K562 (cell line): ENCODE measurements at regions of chr4 and their contacts with region 1.

Region 1: GRCh38 chr4:122577808-122578781 is 42.8 kb downstream of the IL21 start:
- DNase-seq: peak; percentile 63 to 70 (median 67)
- ATAC-seq: peak; percentile 95
- H3K4me3 ChIP-seq: no peak overlapping the region
- H3K27ac ChIP-seq: no peak overlapping the region
- H3K4me1 ChIP-seq: no peaks in the 10 kb centered on the region
- H3K27me3 ChIP-seq: no peaks in the 10 kb centered on the region
- CTCF ChIP-seq: peak; percentile 75 to 78 (median 77)
- EP300 ChIP-seq: no peak
- POLR2A ChIP-seq: no peak
- RAD21 ChIP-seq: peak; percentile 53 to 73; a peak in 3 of 4 replicates

Region 2: DNA sequence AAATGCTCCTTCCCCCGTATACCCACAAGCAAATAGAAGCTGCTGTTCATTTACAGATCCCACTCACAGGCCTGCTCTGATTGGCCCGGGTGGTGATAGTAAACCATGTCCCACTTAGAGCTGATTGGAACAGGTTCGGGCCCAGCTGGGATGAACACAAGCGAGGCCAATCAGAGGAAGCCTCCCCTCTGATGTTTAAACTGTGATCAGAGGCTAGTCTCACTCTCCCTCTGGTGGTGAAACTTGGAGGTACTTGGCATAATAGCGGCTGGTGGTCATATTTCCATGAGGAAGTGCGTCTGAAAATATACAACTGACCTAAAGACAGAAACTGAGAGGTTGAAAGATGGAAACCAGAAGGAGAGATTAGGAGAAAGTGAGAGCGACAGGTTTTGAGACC is 574.8 kb before region 1 on chr4:
- CTCF ChIA-PET with region 1: no interaction called
- POLR2A ChIA-PET with region 1: no interaction called
- in situ Hi-C with region 1: no loop called
- intact Hi-C with region 1: loop called (anchors 5 kb)
- DNase-seq: peak; percentile 78 to 84 (median 82)
- ATAC-seq: peak; percentile 96
- H3K4me3 ChIP-seq: no peak overlapping the region
- H3K27ac ChIP-seq: no peak overlapping the region
- H3K4me1 ChIP-seq: no peaks in the 10 kb centered on the region
- H3K27me3 ChIP-seq: no peaks in the 10 kb centered on the region; a peak in 1 of 5 replicates
- CTCF ChIP-seq: peak; percentile 75 to 84 (median 81)
- EP300 ChIP-seq: no peak
- POLR2A ChIP-seq: no peak
- RAD21 ChIP-seq: peak; percentile 64 to 84

Region 3: GRCh38 chr4:122309988-122310626 is 268.0 kb before region 1 on chr4:
- CTCF ChIA-PET with region 1: interaction called, 18 read pairs
- POLR2A ChIA-PET with region 1: no interaction called
- in situ Hi-C with region 1: loop called (anchors 5 kb)
- intact Hi-C with region 1: loop called (anchors 1 kb)
- DNase-seq: peak; percentile 3 to 12 (median 12)
- ATAC-seq: no peak
- H3K4me3 ChIP-seq: no peak overlapping the region
- H3K27ac ChIP-seq: no peak overlapping the region
- H3K4me1 ChIP-seq: no peaks in the 10 kb centered on the region; a peak in 1 of 5 replicates
- H3K27me3 ChIP-seq: no peaks in the 10 kb centered on the region
- CTCF ChIP-seq: peak in 2 of 3 experiments; percentile 33 to 72; a peak in 3 of 6 replicates
- EP300 ChIP-seq: no peak
- POLR2A ChIP-seq: no peak
- RAD21 ChIP-seq: peak; percentile 51 to 60

Region 4: GRCh38 chr4:122450847-122451246 is 127.2 kb before region 1 on chr4:
- CTCF ChIA-PET with region 1: no interaction called
- POLR2A ChIA-PET with region 1: no interaction called
- in situ Hi-C with region 1: no loop called
- intact Hi-C with region 1: loop called (anchors 2 kb)
- DNase-seq: peak in 2 of 4 experiments; percentile 12 to 34
- ATAC-seq: peak; percentile 88
- H3K4me3 ChIP-seq: no peak overlapping the region
- H3K27ac ChIP-seq: no peak overlapping the region
- H3K4me1 ChIP-seq: no peaks in the 10 kb centered on the region
- H3K27me3 ChIP-seq: no peaks in the 10 kb centered on the region
- CTCF ChIP-seq: peak; percentile 42 to 69 (median 61); a peak in 4 of 6 replicates
- EP300 ChIP-seq: no peak
- POLR2A ChIP-seq: no peak
- RAD21 ChIP-seq: peak in 1 of 2 experiments; percentile 48; a peak in 2 of 4 replicates

Region 5: DNA sequence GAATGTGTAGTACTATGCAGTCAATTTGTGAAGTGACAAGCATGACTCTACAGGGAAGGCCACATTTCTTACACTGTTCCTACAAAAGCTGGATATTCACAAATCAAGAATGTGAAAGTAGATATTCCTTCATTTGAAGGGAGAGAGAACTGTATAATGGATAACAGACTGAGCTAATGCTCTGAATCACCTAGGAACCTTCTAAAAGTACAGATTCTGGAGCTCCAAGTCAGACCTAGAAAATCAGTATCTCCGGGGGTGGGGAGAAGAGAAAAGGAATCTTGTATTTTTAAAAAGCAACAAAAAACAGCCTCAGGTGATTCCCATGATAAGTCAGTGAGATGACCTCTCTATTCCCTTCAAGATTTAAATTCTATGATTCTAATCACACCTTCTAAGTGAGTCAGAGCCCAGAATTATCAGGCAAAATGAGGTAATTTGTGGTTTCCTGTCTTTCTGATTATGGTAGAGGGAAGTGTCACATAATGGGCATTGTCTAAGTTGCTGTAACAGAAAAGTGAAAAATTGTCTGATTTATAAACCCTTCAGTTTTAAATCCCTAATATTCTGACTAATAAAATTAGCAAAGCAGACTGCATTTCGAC is 38.1 kb before region 1 on chr4:
- CTCF ChIA-PET with region 1: no interaction called
- POLR2A ChIA-PET with region 1: no interaction called
- in situ Hi-C with region 1: no loop called
- intact Hi-C with region 1: no loop called
- DNase-seq: no peak
- ATAC-seq: no peak
- H3K4me3 ChIP-seq: no peak overlapping the region
- H3K27ac ChIP-seq: no peak overlapping the region
- H3K4me1 ChIP-seq: no peaks in the 10 kb centered on the region
- H3K27me3 ChIP-seq: no peaks in the 10 kb centered on the region
- CTCF ChIP-seq: no peak
- EP300 ChIP-seq: no peak
- POLR2A ChIP-seq: no peak
- RAD21 ChIP-seq: no peak